ENCODE measurements at regions of chr15 and their contacts with region 1.

Region 1: DNA sequence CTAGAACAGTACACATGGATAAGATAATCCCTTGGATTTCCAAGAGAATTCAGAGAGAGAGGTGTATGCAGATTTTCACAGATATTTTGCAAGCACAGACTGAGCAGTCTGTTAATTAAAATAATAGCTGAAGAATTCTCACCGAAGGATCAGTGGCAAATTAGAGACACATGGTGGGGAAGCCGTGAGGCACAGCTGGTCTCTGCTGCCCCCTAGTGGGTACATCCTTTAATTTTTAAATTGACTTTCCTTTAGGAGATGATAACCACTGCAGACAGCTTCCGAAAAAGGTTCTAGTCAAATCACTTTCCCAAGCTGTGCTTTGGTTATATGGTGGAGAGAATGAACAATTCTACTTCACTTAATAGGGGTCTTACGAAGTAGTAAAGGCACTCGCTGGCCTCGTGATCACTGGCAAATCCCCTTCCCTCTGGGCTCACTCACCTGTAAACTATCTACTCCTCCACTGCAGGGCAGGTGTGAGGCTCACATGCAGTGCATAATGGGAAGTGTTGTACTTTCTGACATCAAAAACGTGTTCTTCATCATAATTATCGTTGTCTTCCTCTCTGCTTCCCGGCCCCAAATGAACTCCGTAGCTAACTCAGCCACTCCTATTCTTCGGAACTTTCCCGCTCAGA is 19.5 kb downstream of the MESD start:
- DNase-seq: no peak
- H3K4me3 ChIP-seq: no peak overlapping the region
- H3K27ac ChIP-seq: no peak overlapping the region
- H3K27me3 ChIP-seq: no peaks in the 10 kb centered on the region
- CTCF ChIP-seq: peak; percentile 79

Region 2: DNA sequence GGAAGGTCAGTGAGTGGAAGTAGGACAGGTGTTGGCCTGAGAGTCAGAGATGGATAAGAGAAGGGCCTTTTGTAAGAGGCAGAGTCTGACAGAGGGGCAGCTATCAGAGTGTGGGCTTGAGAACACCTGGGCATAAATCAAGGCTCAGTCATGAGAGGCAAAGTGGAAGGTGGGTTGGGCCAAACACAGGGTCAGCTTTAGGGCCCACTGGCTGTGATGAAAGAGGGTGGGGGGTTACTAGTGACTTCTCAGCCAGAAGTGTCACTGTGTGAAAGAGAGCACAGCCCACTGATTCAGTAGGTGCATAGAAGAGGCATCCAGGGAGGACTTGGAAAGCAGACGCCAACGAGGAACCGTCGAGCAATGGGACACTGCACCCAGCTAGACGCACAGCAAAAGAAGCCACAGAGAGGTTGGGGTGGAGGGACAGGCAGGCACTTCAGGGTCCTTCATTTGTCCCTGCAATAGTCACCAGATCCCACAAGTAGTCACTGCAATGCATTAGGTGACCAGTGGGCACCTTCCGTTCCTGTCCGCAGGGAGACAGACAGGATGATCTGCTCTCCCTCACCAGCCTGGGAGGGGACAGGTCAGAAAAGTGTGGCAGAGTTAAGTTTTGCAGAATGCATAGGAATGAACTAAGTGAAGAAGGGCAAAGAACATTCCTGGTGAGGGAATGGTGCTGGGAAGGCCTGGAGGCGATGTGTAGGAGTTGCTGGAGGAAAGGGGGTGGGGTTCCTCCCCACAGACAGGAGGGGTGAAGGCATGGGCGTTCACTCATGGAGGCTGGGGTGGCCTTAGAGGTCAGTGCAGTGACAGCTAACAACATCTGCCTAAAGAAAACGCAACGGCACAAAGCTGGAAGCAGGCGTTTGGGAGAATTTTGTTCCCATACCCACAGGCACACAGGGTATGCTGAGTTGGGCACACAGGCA is 16.9 kb before region 1 on chr15:
- CTCF ChIA-PET with region 1: interaction called, 11 read pairs
- POLR2A ChIA-PET with region 1: interaction called, 4 read pairs
- DNase-seq: no peak
- H3K4me3 ChIP-seq: no peak overlapping the region
- H3K27ac ChIP-seq: peak overlapping the region; percentile 11
- H3K27me3 ChIP-seq: no peaks in the 10 kb centered on the region
- CTCF ChIP-seq: no peak

Region 3: DNA sequence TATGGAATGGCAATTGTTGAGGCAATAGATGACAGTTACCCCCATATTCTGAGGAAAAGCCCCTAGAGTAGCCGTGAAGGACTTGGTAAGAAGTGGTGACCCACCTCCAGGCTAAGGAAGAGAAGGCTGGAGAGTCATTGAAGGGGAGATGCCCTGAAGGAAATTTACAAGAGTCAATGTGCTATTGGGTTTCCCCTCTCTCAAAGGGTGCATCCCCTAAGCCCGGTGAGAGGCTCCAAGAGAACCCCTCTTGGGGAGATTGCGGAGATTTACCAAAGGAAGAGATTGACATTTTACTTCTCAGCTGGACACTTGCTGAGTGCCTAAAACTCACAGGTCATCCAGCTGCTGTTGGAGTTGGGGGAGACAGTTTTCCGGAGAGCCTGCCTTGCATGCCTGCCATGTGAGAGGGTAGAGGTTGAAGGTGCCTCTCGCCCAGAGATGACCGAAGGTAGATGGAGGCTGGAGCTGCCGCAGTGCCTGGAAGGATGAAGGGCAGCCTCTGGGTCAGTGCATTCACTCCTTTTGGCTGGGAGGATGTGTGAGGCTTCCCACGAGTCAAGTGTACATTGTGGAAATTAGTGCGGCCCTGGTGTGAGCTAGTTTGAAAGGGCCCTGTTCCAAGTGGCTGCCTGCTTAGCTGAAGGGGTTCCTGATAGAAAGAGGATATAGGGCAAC is 11.2 kb before region 1 on chr15:
- CTCF ChIA-PET with region 1: interaction called, 13 read pairs
- POLR2A ChIA-PET with region 1: interaction called, 4 read pairs
- DNase-seq: no peak
- H3K4me3 ChIP-seq: no peak overlapping the region
- H3K27ac ChIP-seq: no peak overlapping the region
- H3K27me3 ChIP-seq: no peaks in the 10 kb centered on the region
- CTCF ChIP-seq: no peak

Region 4: DNA sequence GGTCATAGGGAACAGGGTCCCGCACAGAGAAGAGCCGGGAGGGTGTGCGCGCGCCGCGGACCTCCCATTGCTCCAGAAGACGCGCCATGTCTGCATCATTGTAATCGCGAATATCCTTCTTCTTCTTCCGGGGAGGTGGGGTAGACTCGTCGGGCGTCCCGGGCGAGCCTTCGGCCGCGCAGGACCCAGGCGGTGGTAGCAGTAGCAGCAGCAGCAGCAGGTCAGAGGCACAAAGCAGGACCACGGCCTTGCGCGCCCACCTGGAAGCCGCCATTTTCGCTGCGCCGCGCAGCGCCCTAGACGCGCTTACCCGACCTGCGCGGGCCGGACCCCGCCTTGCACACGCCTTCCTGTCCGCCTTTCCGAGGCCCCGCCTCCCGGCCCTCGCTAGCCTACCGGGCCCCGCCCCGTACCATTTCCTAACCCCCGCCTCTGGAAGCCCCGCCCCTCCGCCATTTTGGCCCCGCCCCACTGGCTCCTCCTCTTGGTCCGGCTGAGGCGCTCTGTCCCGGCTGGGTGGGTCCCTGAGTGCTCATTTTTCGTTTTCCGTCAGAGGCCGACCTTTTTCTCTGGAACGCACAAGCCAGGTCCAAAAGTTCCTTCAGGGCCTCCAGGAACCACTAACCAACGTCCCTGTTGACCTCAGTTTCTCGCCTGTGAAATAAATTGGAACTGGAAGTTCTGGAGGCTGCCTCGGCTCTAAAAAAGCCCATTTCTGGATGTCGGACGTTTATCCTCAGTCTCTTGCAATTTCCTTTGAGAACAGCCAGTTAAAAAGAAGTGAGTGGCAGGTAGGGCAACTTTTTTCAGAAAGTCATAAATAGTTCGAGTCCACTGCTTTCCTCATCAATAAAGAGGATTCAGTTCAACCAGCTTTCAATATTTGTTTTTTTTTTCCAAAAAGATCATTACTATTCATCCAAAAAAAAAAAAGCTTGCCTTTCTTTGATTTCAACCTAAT is 19.7 kb after region 1 on chr15 and contains the start of gene MESD:
- CTCF ChIA-PET with region 1: interaction called, 18 read pairs
- POLR2A ChIA-PET with region 1: no interaction called
- DNase-seq: peak; percentile 81
- H3K4me3 ChIP-seq: peak within 1 kb of the TSS; percentile 91
- H3K27ac ChIP-seq: peak within 1 kb of the TSS; percentile 59
- H3K27me3 ChIP-seq: no peaks in the 10 kb centered on the region
- CTCF ChIP-seq: no peak
- polyA plus RNA-seq, gene MESD: 19.1 and 23.9 TPM in 2 replicates

Region 5: DNA sequence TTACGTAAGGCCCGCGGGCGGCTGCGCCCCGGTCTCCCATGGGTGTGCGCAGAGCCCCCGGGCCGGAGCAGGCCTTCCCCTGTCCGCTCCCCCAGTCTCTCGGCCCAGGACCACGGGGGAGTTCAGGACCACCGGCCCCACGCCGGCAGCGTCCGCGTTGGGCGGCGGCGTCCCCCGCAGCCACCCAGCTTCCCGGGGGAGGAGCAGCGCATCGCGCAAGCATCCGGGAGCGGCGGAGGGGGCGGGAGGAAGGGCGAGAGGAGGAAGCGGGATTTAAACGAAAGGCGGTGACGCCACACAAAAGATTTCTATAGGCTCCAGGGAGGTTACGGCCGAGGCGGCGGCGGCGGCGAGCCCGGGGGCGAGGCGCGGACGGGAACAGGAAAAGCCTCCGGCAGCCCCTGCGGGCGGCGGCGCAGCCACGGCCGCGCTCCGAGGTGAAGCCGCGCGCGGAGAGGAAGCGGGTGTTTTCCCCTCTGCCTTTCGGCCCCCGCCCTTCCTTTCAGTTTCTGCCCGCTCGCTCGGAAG is 30.6 kb after region 1 on chr15 and contains the start of gene TLNRD1:
- CTCF ChIA-PET with region 1: no interaction called
- POLR2A ChIA-PET with region 1: no interaction called
- DNase-seq: peak; percentile 73
- H3K4me3 ChIP-seq: peak within 1 kb of the TSS; percentile 83
- H3K27ac ChIP-seq: peak within 1 kb of the TSS; percentile 89
- H3K27me3 ChIP-seq: no peaks in the 10 kb centered on the region
- CTCF ChIP-seq: no peak
- polyA plus RNA-seq, gene TLNRD1: 3.5 and 4.1 TPM in 2 replicates